ENCODE measurements at regions of chr17 and their contacts with region 1.

Region 1: DNA sequence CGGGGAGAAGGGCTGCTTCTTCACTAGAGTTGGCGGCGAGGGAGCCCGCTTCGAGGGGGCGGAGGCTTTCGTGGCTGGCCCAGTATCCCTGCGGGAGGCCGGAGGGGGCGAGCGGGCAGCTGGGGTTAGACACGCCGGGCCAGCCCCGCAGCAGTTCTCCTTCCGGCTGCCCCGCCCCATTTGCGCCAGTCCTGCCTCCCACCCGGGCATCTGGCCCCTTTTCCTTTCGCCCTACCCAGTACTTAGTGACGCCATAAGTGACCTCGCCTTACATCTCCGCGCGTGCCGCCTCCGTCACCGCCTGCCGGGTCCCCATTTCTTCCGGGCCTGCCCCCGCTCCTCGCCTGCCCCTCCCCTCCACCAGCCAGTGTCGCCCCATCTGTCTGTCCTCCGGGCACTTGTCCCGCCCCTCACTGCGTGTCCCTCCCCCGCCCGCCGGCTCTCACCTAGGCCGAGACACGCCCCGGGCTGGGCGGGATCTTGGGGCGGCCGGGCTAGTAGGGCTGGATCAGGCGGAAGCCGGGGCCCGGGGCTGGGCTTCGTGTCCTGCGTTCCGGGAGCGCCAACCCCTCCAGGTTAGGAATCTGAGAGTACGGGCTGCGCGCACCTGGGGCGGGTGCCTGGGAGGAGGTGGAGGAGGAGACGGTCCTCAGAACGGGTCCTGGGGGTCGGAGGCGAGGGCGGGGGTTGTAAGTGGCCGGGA is 14.3 kb downstream of the SPATA32 start:
- DNase-seq: peak; percentile 92
- H3K4me3 Mint-ChIP-seq: peak overlapping the region; percentile 88
- H3K27ac Mint-ChIP-seq: peak overlapping the region; percentile 93
- H3K4me1 Mint-ChIP-seq: peaks cover 51% of the 10 kb centered on the region
- H3K27me3 Mint-ChIP-seq: no peaks in the 10 kb centered on the region

Region 2: GRCh38 chr17:45060797-45061605 is 186.6 kb before region 1 on chr17 and contains the start of gene NMT1:
- intact Hi-C with region 1: loop called (anchors 1 kb)
- DNase-seq: peak; percentile 96
- H3K4me3 Mint-ChIP-seq: peak within 1 kb of the TSS; percentile 92
- H3K27ac Mint-ChIP-seq: peak within 1 kb of the TSS; percentile 100
- H3K4me1 Mint-ChIP-seq: peaks cover 25% of the 10 kb centered on the region
- H3K27me3 Mint-ChIP-seq: peaks cover 2% of the 10 kb centered on the region
- total RNA-seq, gene NMT1: 168 and 173 TPM in 2 replicates

Region 3: DNA sequence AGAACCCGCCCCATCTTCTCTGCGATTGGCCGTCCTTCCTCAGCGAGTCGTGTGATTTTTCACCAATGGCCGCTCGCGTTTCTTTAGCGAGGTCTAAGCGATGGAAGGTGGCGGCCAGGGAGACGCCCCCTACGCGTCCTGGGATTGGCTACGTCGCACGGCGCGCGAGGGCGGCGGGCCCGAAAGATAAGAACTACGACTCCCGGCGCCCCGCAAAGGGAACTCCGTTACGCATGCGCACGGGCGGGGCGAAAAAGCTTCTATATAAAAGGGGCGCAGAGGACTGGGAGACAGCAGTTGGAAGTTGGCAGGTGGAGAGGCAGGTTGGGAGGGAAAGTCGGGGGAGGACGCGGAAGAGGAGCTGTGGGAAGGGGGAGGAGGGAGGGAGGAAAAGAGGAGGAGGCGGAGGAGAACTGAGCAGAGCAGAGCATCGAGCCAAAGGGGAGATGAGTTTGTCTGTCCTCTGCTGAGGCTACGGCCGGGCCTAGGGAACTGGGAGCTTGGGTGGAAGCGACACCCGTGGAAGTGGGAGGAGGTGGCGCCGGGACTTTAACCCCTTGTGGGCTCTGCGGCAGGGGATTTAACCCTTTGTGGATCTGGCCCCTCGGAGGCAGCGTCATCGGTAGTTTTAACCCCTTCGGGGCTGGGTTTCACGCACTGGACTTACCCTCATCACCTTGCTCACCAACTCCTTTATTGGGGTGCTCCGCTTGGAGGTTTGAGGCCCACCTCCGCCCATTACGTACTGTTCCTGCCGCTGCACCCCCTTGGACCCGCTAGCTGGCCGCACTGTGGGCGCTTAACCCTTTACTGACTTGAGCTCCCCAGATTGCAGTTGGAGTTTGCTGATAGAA is 99.2 kb before region 1 on chr17 and contains the start of gene HEXIM1:
- intact Hi-C with region 1: loop called (anchors 1 kb)
- DNase-seq: peak; percentile 99
- H3K4me3 Mint-ChIP-seq: peak within 1 kb of the TSS; percentile 96
- H3K27ac Mint-ChIP-seq: peak within 1 kb of the TSS; percentile 98
- H3K4me1 Mint-ChIP-seq: peaks cover 26% of the 10 kb centered on the region
- H3K27me3 Mint-ChIP-seq: no peaks in the 10 kb centered on the region
- total RNA-seq, gene HEXIM1: 65.9 and 67.9 TPM in 2 replicates

Region 4: DNA sequence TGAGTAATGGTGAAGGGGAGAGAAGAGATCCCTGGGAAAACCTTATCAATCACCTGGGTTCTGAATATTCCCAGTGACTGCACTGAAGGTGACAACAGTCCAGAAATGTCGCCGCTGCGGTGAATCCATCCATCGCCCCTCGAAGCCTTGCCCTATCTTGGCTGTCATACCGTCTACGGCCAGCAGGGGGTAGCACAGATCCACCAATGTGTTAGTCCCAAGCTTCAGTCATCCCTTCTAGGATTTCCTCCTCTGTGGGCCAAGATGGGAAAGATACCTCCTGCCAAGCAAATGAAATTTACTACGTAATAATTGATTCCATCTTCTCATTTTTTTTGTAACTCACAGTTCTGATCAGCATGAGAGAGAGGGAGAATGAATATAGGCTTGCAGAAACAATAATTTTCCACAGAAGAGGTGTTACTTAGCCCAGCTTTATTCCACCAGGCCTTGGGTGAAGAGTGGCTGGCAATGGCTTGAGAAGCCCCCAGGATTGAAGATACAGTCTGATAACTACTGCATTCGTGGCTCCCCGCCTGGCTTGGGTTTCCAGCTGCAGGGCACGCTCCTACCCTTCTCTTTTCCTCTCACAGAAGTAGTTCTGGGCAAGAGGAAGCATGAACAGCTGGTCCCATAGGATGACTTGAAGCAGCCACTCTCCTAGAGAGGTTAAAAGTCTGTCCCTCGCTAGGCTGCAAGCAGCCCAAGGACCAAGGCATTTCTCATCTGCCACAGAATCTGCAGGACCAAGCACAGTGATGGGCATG is 28.5 kb before region 1 on chr17:
- intact Hi-C with region 1: loop called (anchors 1 kb)
- DNase-seq: peak; percentile 73
- H3K4me3 Mint-ChIP-seq: peak overlapping the region; percentile 93
- H3K27ac Mint-ChIP-seq: peak overlapping the region; percentile 80
- H3K4me1 Mint-ChIP-seq: peaks cover 42% of the 10 kb centered on the region
- H3K27me3 Mint-ChIP-seq: no peaks in the 10 kb centered on the region

Region 5: GRCh38 chr17:45235416-45236281 is 11.9 kb before region 1 on chr17:
- intact Hi-C with region 1: loop called (anchors 1 kb)
- DNase-seq: no peak
- H3K4me3 Mint-ChIP-seq: peak overlapping the region; percentile 28
- H3K27ac Mint-ChIP-seq: peak overlapping the region; percentile 38
- H3K4me1 Mint-ChIP-seq: peaks cover 77% of the 10 kb centered on the region
- H3K27me3 Mint-ChIP-seq: no peaks in the 10 kb centered on the region

Region 6: DNA sequence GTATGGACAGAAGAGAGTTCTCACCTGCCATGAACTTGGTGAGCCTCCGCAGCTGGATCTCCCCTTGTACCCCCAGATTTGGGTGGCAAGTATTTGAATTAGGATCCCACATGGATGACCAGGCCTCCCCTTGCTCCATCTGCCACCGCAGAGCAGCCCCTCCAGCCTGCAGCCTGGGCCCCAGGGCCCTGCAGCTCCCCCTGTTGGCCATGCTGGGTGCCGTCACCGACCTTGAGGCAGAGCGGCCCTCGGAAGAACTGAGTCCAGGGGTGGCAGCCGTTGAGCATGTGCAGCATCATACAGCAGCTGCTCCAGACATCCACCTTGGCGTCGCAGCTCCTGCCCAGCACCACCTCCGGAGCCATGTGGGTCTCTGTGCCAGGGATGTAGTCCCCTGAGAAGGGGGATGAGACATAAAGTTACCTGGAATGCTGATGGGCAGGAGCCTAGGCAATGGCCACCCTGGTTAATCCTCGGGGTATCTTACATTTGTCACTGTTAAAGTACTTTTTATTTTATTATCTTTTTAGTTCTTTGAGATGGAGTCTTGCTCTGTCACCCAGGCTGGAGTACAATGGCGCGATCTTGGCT is 23.3 kb after region 1 on chr17:
- intact Hi-C with region 1: loop called (anchors 2 kb)
- DNase-seq: peak; percentile 29
- H3K4me3 Mint-ChIP-seq: no peak overlapping the region
- H3K27ac Mint-ChIP-seq: peak overlapping the region; percentile 18
- H3K4me1 Mint-ChIP-seq: peaks cover 20% of the 10 kb centered on the region
- H3K27me3 Mint-ChIP-seq: no peaks in the 10 kb centered on the region

Region 7: GRCh38 chr17:45284176-45285140 is 36.9 kb after region 1 on chr17:
- intact Hi-C with region 1: no loop called
- DNase-seq: no peak
- H3K4me3 Mint-ChIP-seq: no peak overlapping the region
- H3K27ac Mint-ChIP-seq: peak overlapping the region; percentile 55
- H3K4me1 Mint-ChIP-seq: peaks cover 7% of the 10 kb centered on the region
- H3K27me3 Mint-ChIP-seq: no peaks in the 10 kb centered on the region

Region 8: GRCh38 chr17:45317112-45317928 is 69.7 kb after region 1 on chr17:
- intact Hi-C with region 1: loop called (anchors 1 kb)
- DNase-seq: peak; percentile 99
- H3K4me3 Mint-ChIP-seq: peak overlapping the region; percentile 88
- H3K27ac Mint-ChIP-seq: peak overlapping the region; percentile 95
- H3K4me1 Mint-ChIP-seq: peaks cover 80% of the 10 kb centered on the region
- H3K27me3 Mint-ChIP-seq: no peaks in the 10 kb centered on the region

Measured in activated T-helper 1 cell treated with anti-CD3 and anti-CD28 coated beads, Interleukin-12 subunit alpha, Interleukin-12 subunit beta, Interleukin-2, Interleukin-4 antibody, amounts not matched to agents 30 ng/mL and 10 ng/mL and 1 ng/mL, durations not matched to agents 14 hours and 24 hours and 36 hours (primary cell).